ENCODE measurements at regions of chr5 and their contacts with region 1.

Region 1: GRCh38 chr5:43389679-43390329 is 22.4 kb downstream of the CCL28 start:
- DNase-seq: peak; percentile 87
- ATAC-seq: peak; percentile 98
- H3K4me3 ChIP-seq: no peak overlapping the region
- H3K27ac ChIP-seq: no peak overlapping the region
- H3K4me1 ChIP-seq: no peaks in the 10 kb centered on the region
- H3K27me3 ChIP-seq: no peaks in the 10 kb centered on the region
- CTCF ChIP-seq: peak; percentile 87
- EP300 ChIP-seq: no peak
- POLR2A ChIP-seq: no peak
- RAD21 ChIP-seq: peak; percentile 88

Region 2: DNA sequence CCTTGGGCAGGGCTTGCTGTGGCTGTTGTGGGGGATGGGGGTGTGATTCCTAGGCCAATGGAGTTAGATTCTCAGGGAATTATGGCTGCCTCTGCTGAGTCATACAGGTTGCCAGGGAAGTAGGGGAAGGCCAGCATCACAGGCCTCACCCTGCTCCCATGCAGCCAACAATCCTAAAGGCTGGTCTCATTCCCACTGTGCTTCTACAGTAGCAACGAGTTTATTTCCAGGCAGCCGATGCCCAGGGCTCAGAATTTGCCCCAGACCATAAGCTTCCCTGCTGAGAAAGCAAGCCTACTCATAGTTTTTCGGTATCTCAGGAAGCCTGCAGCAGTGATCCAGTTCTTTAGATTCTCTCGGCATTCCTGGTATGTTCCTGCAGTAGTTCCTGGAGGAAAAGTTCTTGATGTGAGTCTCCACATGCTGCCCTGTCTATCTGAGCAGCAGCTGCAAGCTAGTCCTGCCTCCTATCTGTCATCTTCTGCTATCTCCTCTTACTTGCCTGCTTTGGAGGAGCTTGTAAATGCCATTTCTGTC is 518.9 kb before region 1 on chr5:
- CTCF ChIA-PET with region 1: no interaction called
- POLR2A ChIA-PET with region 1: no interaction called
- in situ Hi-C with region 1: no loop called
- intact Hi-C with region 1: no loop called
- DNase-seq: no peak
- ATAC-seq: peak; percentile 8; the same call in 2 of the 3 replicates
- H3K4me3 ChIP-seq: no peak overlapping the region
- H3K27ac ChIP-seq: peak overlapping the region; percentile 28
- H3K4me1 ChIP-seq: peaks cover 66% of the 10 kb centered on the region
- H3K27me3 ChIP-seq: no peaks in the 10 kb centered on the region
- CTCF ChIP-seq: peak; percentile 37; the same call in 1 of the 2 replicates
- EP300 ChIP-seq: no peak
- POLR2A ChIP-seq: no peak
- RAD21 ChIP-seq: no peak

Region 3: GRCh38 chr5:43244823-43245565 is 144.8 kb before region 1 on chr5:
- CTCF ChIA-PET with region 1: no interaction called
- POLR2A ChIA-PET with region 1: no interaction called
- in situ Hi-C with region 1: no loop called
- intact Hi-C with region 1: no loop called
- DNase-seq: no peak
- ATAC-seq: peak; percentile 52; the same call in 2 of the 3 replicates
- H3K4me3 ChIP-seq: no peak overlapping the region
- H3K27ac ChIP-seq: no peak overlapping the region
- H3K4me1 ChIP-seq: peaks cover 7% of the 10 kb centered on the region; the same call in 1 of the 2 replicates
- H3K27me3 ChIP-seq: peaks cover 3 to 16% of the 10 kb centered on the region in 2 experiments; a peak in 4 of 5 replicates
- CTCF ChIP-seq: no peak
- EP300 ChIP-seq: no peak
- POLR2A ChIP-seq: no peak
- RAD21 ChIP-seq: no peak

Region 4: GRCh38 chr5:43305948-43306565 is 83.7 kb before region 1 on chr5:
- CTCF ChIA-PET with region 1: interaction called, 4 read pairs
- POLR2A ChIA-PET with region 1: no interaction called
- in situ Hi-C with region 1: no loop called
- intact Hi-C with region 1: loop called (anchors 1 kb)
- DNase-seq: peak; percentile 70
- ATAC-seq: peak; percentile 63
- H3K4me3 ChIP-seq: no peak overlapping the region; a peak in 2 of 6 replicates
- H3K27ac ChIP-seq: no peak overlapping the region
- H3K4me1 ChIP-seq: peaks cover 84% of the 10 kb centered on the region
- H3K27me3 ChIP-seq: no peaks in the 10 kb centered on the region
- CTCF ChIP-seq: peak; percentile 46
- EP300 ChIP-seq: no peak
- POLR2A ChIP-seq: peak in 1 of 2 experiments; percentile 45; a peak in 1 of 4 replicates
- RAD21 ChIP-seq: no peak

Region 5: DNA sequence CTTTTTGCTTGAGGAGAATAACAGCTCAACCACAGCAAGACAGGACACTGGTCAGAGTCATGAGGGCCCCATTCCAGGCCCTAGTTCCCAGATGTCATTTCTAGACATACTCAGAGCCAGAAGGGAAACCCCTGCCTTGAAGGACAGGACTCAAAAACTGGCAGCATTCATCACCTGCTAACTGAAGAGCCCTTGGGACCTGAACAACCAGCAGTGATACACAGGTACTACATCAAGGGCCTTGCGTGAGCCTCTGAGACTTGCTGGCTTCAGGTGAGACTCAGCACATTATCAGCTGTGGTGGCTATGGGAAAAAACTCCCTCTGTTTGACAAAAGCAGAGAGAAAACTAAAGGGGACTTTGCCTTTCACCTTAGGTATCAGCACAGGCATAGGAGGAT is 71.3 kb after region 1 on chr5:
- CTCF ChIA-PET with region 1: no interaction called
- POLR2A ChIA-PET with region 1: no interaction called
- in situ Hi-C with region 1: no loop called
- intact Hi-C with region 1: no loop called
- DNase-seq: no peak
- ATAC-seq: no peak
- H3K4me3 ChIP-seq: no peak overlapping the region
- H3K27ac ChIP-seq: no peak overlapping the region
- H3K4me1 ChIP-seq: no peaks in the 10 kb centered on the region
- H3K27me3 ChIP-seq: no peaks in the 10 kb centered on the region
- CTCF ChIP-seq: no peak
- EP300 ChIP-seq: no peak
- POLR2A ChIP-seq: no peak
- RAD21 ChIP-seq: no peak